T-cell (primary cell): ENCODE measurements at regions of chr1 and their contacts with region 1.

Region 1: GRCh38 chr1:205061665-205062069 is 18.7 kb downstream of the CNTN2 start:
- DNase-seq: peak; percentile 47 to 80 (median 68)
- ATAC-seq: peak; percentile 66 to 80 (median 70)
- H3K4me3 ChIP-seq: no peak overlapping the region
- H3K4me3 Mint-ChIP-seq: no peak overlapping the region
- H3K27ac ChIP-seq: no peak overlapping the region
- H3K27ac Mint-ChIP-seq: no peak overlapping the region
- H3K4me1 ChIP-seq: peaks cover 0 to 7% of the 10 kb centered on the region in 2 experiments
- H3K4me1 Mint-ChIP-seq: no peaks in the 10 kb centered on the region
- H3K27me3 ChIP-seq: peaks cover 0 to 7% of the 10 kb centered on the region in 2 experiments
- H3K27me3 Mint-ChIP-seq: no peaks in the 10 kb centered on the region

Region 2: GRCh38 chr1:204975570-204976235 is 86.0 kb before region 1 on chr1:
- CTCF ChIA-PET with region 1: interaction called, 8 to 11 read pairs
- POLR2A ChIA-PET with region 1: no interaction called
- DNase-seq: peak in 31 of 35 experiments; percentile 11 to 63 (median 29)
- ATAC-seq: peak; percentile 56 to 65 (median 62)
- H3K4me3 ChIP-seq: no peak overlapping the region
- H3K4me3 Mint-ChIP-seq: no peak overlapping the region
- H3K27ac ChIP-seq: no peak overlapping the region
- H3K27ac Mint-ChIP-seq: no peak overlapping the region
- H3K4me1 ChIP-seq: peaks cover 0 to 8% of the 10 kb centered on the region in 2 experiments
- H3K4me1 Mint-ChIP-seq: peaks cover 0 to 13% (median 0%) of the 10 kb centered on the region in 3 donors
- H3K27me3 ChIP-seq: peaks cover 0 to 55% of the 10 kb centered on the region in 2 experiments
- H3K27me3 Mint-ChIP-seq: peaks cover 7 to 12% of the 10 kb centered on the region in 2 donors

Region 3: DNA sequence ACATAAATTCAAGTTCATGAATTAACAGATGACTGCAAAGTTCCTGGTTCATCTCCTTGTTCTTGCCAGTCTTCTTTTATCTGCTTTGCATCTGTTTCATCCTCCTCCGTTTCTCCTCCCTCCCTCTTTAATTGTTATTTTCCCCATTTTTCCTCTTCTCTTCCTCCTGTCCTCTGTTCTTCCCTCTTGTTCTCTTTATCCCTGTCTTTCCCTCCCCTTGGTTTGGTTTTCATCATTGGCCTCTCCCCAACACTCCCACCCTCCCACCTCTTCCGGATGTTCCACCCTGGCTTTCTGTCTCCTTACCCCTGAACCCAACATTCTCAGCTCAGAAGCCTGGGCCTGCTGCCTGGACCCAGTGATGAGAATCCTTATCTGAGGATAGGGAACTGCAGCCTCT is 75.0 kb before region 1 on chr1:
- CTCF ChIA-PET with region 1: interaction called, 8 to 10 read pairs
- POLR2A ChIA-PET with region 1: no interaction called
- DNase-seq: no peak
- ATAC-seq: no peak
- H3K4me3 ChIP-seq: no peak overlapping the region
- H3K4me3 Mint-ChIP-seq: no peak overlapping the region
- H3K27ac ChIP-seq: no peak overlapping the region
- H3K27ac Mint-ChIP-seq: no peak overlapping the region
- H3K4me1 ChIP-seq: no peaks in the 10 kb centered on the region
- H3K4me1 Mint-ChIP-seq: peaks cover 2 to 10% (median 3%) of the 10 kb centered on the region in 3 donors
- H3K27me3 ChIP-seq: peaks cover 0 to 30% of the 10 kb centered on the region in 2 experiments
- H3K27me3 Mint-ChIP-seq: peaks cover 16% of the 10 kb centered on the region in 2 donors